ENCODE measurements at regions of chr12 and their contacts with region 1.

Region 1: GRCh38 chr12:50901685-50902113 is 50.6 kb upstream of the HIGD1C start:
- DNase-seq: no peak
- H3K4me3 ChIP-seq: no peak overlapping the region
- H3K27ac ChIP-seq: no peak overlapping the region
- H3K4me1 ChIP-seq: no peaks in the 10 kb centered on the region
- H3K27me3 ChIP-seq: no peaks in the 10 kb centered on the region
- CTCF ChIP-seq: no peak
- POLR2A ChIP-seq: no peak

Region 2: GRCh38 chr12:50859621-50860310 is 41.9 kb before region 1 on chr12:
- intact Hi-C with region 1: loop called (anchors 2 kb)
- DNase-seq: no peak
- H3K4me3 ChIP-seq: no peak overlapping the region
- H3K27ac ChIP-seq: no peak overlapping the region
- H3K4me1 ChIP-seq: no peaks in the 10 kb centered on the region
- H3K27me3 ChIP-seq: no peaks in the 10 kb centered on the region
- CTCF ChIP-seq: no peak
- POLR2A ChIP-seq: no peak

Region 3: GRCh38 chr12:51246254-51246853 is 344.7 kb after region 1 on chr12:
- intact Hi-C with region 1: no loop called
- DNase-seq: no peak
- H3K4me3 ChIP-seq: no peak overlapping the region
- H3K27ac ChIP-seq: peak overlapping the region; percentile 29 to 53
- H3K4me1 ChIP-seq: peaks cover 0 to 2% of the 10 kb centered on the region in 2 donors
- H3K27me3 ChIP-seq: no peaks in the 10 kb centered on the region
- CTCF ChIP-seq: no peak
- POLR2A ChIP-seq: no peak

Measured in breast epithelium (tissue), 4 donors.